ENCODE measurements at regions of chr5 and their contacts with region 1.

Region 1: GRCh38 chr5:1641560-1642166 is 117.9 kb upstream of the LPCAT1 start:
- ATAC-seq: peak; percentile 70 to 89 (median 82)
- H3K4me3 ChIP-seq: no peak overlapping the region
- H3K27ac ChIP-seq: no peak overlapping the region
- H3K4me1 ChIP-seq: peaks cover 3 to 14% of the 10 kb centered on the region in 2 donors

Region 2: GRCh38 chr5:1167728-1168709 is 473.6 kb before region 1 on chr5:
- in situ Hi-C with region 1: loop called in 4 of 9 experiments (anchors 25 kb)
- ATAC-seq: peak; percentile 88 to 95 (median 89)
- H3K4me3 ChIP-seq: peak overlapping the region; percentile 16 to 29 (median 22)
- H3K27ac ChIP-seq: no peak overlapping the region
- H3K4me1 ChIP-seq: peaks cover 0 to 3% of the 10 kb centered on the region in 2 donors

Region 3: GRCh38 chr5:1182633-1183423 is 458.8 kb before region 1 on chr5:
- in situ Hi-C with region 1: loop called in 1 of 9 experiments (anchors 25 kb)
- ATAC-seq: peak in 5 of 8 experiments; percentile 87 to 93 (median 89)
- H3K4me3 ChIP-seq: no peak overlapping the region
- H3K27ac ChIP-seq: peak overlapping the region; percentile 59 to 60
- H3K4me1 ChIP-seq: peaks cover 22 to 25% of the 10 kb centered on the region in 2 donors

Region 4: DNA sequence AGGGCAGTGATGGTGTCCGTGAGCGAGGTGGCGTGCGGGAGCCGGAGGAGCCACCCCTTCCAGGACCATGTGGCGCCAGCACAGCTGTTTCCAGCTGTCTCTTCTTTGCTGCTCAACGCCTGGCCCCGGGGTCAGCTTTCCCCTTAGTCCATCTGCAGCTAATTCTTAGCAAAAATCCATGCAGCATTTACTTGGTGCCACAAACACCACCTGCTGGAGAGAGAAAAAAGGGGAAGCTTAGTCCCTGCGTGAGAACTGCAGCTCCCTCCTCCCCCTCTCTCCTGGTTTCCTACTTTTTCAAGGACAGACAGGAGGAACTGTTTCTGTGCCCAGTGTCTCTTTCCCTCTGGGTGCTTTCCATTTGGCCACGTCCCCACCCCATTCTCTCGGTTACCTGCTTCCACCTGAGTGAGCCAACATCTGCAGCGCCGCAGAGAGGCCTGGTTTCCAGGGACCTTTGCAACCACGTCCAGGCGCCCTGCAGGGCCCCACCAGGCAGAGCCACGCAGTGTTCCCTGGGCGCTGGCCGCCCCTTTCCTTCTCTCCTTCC is 436.9 kb before region 1 on chr5:
- in situ Hi-C with region 1: loop called in 2 of 9 experiments (anchors 25 kb)
- ATAC-seq: peak in 6 of 8 experiments; percentile 23 to 61 (median 50)
- H3K4me3 ChIP-seq: no peak overlapping the region
- H3K27ac ChIP-seq: no peak overlapping the region
- H3K4me1 ChIP-seq: peaks cover 0 to 4% of the 10 kb centered on the region in 2 donors

Region 5: DNA sequence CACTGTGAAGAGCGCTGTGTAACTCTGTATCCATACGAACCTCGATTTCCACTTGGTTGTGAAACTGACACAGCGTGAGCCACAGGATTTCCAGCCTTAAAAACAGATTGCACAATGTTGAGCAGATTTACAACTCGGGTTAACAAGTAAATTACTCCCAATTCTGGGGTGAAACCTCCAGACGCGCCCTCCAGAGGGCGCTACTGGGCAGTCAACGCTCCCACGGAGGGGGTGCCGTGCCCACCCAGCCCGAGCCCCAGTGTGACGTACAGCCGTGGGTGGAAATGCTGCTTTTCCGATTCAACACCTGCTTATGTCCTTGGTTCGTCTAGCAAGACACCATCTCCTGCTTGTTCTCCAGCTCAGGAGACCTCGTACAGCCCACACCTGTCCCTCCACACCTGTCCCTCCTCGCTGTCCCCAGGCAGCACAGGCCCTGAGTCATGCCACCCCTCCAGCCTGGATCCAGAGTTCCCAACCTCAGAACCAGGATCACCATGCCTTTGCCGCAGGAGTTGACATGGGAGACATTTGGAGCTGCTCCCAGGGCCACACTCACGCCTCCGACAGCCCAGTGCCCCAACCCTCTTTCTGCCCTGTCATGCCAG is 162.0 kb before region 1 on chr5:
- in situ Hi-C with region 1: loop called in 1 of 9 experiments (anchors 25 kb)
- ATAC-seq: peak in 6 of 8 experiments; percentile 11 to 64 (median 40)
- H3K4me3 ChIP-seq: no peak overlapping the region
- H3K27ac ChIP-seq: no peak overlapping the region
- H3K4me1 ChIP-seq: no peaks in the 10 kb centered on the region

Measured in motor neuron (in vitro differentiated cells).